WTC11 (cell line): ENCODE measurements at regions of chr4 and their contacts with region 1.

Region 1: DNA sequence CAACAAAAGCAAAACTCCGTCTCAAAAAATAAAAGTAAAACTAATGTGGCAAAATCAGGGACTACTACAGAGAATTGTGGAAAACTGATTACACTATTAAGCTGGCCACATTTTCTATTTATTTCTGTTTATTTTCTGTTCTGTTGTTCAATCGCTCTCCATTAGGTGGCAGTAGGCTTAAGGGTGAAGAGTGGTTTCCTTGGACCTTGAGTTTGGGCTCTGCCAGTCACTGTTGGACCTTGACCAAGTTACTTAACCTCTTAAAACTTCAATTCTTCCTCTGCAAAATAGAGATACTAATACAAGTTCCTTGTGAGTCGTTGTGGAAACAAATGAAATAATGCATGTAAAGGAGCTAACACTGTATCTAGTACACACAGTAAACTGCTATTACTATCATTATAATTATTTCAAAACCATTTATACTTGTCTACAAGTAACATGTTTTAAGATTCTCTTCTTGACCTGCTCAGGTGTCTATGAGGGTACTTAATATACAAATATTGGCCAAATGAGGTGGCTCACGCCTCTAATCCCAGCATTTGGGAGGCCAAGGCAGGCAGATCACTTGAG is 15.2 kb downstream of the HSD17B11 start:
- DNase-seq: no peak
- ATAC-seq: peak; percentile 72
- H3K4me3 Mint-ChIP-seq: no peak overlapping the region
- H3K27ac Mint-ChIP-seq: no peak overlapping the region
- H3K4me1 Mint-ChIP-seq: no peaks in the 10 kb centered on the region
- H3K27me3 Mint-ChIP-seq: no peaks in the 10 kb centered on the region
- CTCF ChIP-seq: peak; percentile 5; the same call in 1 of the 2 replicates

Region 2: GRCh38 chr4:87304671-87305432 is 71.0 kb before region 1 on chr4:
- CTCF ChIA-PET with region 1: no interaction called
- POLR2A ChIA-PET with region 1: no interaction called
- DNase-seq: no peak
- ATAC-seq: no peak
- H3K4me3 Mint-ChIP-seq: no peak overlapping the region
- H3K27ac Mint-ChIP-seq: no peak overlapping the region
- H3K4me1 Mint-ChIP-seq: no peaks in the 10 kb centered on the region
- H3K27me3 Mint-ChIP-seq: no peaks in the 10 kb centered on the region
- CTCF ChIP-seq: no peak

Region 3: GRCh38 chr4:87465739-87466366 is 90.0 kb after region 1 on chr4:
- CTCF ChIA-PET with region 1: interaction called, 15 read pairs
- POLR2A ChIA-PET with region 1: no interaction called
- DNase-seq: no peak
- ATAC-seq: peak; percentile 48; the same call in 1 of the 2 replicates
- H3K4me3 Mint-ChIP-seq: no peak overlapping the region
- H3K27ac Mint-ChIP-seq: 0 out of 2 replicates have a peak overlapping the region, but pooled peaks have one; percentile 23
- H3K4me1 Mint-ChIP-seq: peaks cover 11% of the 10 kb centered on the region
- H3K27me3 Mint-ChIP-seq: no peaks in the 10 kb centered on the region
- CTCF ChIP-seq: 0 out of 2 replicates have a peak, but pooled peaks have one; percentile 21

Region 4: GRCh38 chr4:87589522-87589921 is 213.7 kb after region 1 on chr4:
- CTCF ChIA-PET with region 1: no interaction called
- POLR2A ChIA-PET with region 1: no interaction called
- DNase-seq: no peak
- ATAC-seq: no peak
- H3K4me3 Mint-ChIP-seq: no peak overlapping the region
- H3K27ac Mint-ChIP-seq: no peak overlapping the region
- H3K4me1 Mint-ChIP-seq: no peaks in the 10 kb centered on the region
- H3K27me3 Mint-ChIP-seq: no peaks in the 10 kb centered on the region
- CTCF ChIP-seq: no peak